Breast epithelium (tissue), 4 donors: ENCODE measurements at regions of chr2 and their contacts with region 1.

Region 1: GRCh38 chr2:36797324-36798070 is 101.0 kb downstream of the VIT start:
- DNase-seq: no peak
- H3K4me3 ChIP-seq: no peak overlapping the region
- H3K27ac ChIP-seq: no peak overlapping the region
- H3K4me1 ChIP-seq: no peaks in the 10 kb centered on the region
- H3K27me3 ChIP-seq: no peaks in the 10 kb centered on the region
- CTCF ChIP-seq: no peak
- POLR2A ChIP-seq: no peak

Region 2: GRCh38 chr2:35547984-35548570 is 1249.4 kb before region 1 on chr2:
- intact Hi-C with region 1: loop called (anchors 5 kb)
- DNase-seq: no peak
- H3K4me3 ChIP-seq: no peak overlapping the region
- H3K27ac ChIP-seq: no peak overlapping the region
- H3K4me1 ChIP-seq: no peaks in the 10 kb centered on the region
- H3K27me3 ChIP-seq: no peaks in the 10 kb centered on the region
- CTCF ChIP-seq: no peak
- POLR2A ChIP-seq: no peak

Region 3: DNA sequence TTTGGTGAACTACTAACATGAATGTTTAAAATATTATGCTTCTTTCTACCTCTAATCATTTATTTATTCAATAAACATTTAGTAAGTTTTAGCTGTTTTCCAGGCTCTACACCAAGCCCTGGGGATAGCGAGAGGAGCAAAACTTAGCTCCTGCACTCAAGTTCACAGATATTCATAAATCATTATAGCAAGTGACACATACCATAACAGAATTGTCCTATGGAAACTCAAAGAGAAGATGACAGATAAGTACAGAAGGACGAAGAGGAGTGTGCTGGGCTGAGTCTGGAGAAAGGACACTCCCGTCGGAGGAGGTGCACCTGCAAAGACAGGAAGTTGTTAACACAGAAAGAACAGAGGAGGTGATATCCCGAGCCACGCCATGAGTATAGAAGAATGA is 114.9 kb before region 1 on chr2:
- intact Hi-C with region 1: no loop called
- DNase-seq: no peak
- H3K4me3 ChIP-seq: no peak overlapping the region
- H3K27ac ChIP-seq: no peak overlapping the region
- H3K4me1 ChIP-seq: no peaks in the 10 kb centered on the region
- H3K27me3 ChIP-seq: no peaks in the 10 kb centered on the region
- CTCF ChIP-seq: no peak
- POLR2A ChIP-seq: no peak

Region 4: GRCh38 chr2:36762764-36763490 is 34.6 kb before region 1 on chr2:
- intact Hi-C with region 1: loop called (anchors 2 kb)
- DNase-seq: no peak
- H3K4me3 ChIP-seq: no peak overlapping the region
- H3K27ac ChIP-seq: no peak overlapping the region
- H3K4me1 ChIP-seq: no peaks in the 10 kb centered on the region
- H3K27me3 ChIP-seq: no peaks in the 10 kb centered on the region
- CTCF ChIP-seq: no peak
- POLR2A ChIP-seq: no peak

Region 5: DNA sequence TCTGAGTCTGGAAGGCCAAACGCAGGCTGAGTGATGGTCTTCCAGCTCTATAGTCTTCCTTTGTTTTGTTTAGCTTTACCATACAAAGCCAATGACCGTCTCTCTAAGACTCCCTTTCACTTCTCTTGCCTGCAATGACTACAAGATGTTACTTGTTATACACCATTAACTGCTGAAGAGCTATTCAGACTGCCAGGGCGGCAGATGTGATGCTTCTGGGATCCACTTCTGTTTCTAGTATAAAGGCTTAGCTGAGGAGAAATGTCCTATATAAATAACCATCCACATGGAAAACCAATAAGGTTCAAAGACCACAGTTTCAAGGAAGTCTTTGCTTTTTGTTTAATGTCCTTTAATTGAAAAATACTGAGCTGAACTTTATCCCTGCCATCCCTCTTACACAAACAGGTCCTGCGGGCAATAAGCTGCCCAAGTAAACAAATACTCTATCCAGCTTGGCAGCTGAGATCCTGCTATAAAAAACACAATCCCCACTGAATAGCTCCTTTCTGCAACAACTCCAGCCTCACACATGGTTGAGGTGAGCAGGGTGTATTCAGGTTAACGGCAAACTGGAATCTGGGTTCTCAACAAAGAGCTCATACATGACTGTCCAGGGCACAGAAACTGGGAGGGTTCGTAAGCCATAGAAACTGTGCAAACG is 23.6 kb after region 1 on chr2:
- intact Hi-C with region 1: no loop called
- DNase-seq: peak in 1 of 2 donors; percentile 32
- H3K4me3 ChIP-seq: no peak overlapping the region
- H3K27ac ChIP-seq: peak overlapping the region; percentile 60 to 77
- H3K4me1 ChIP-seq: no peaks in the 10 kb centered on the region
- H3K27me3 ChIP-seq: no peaks in the 10 kb centered on the region
- CTCF ChIP-seq: no peak
- POLR2A ChIP-seq: no peak